ENCODE measurements at regions of chr14 and their contacts with region 1.

Region 1: GRCh38 chr14:77151918-77152588 is 10.5 kb upstream of the ZDHHC22 start:
- DNase-seq: no peak
- H3K4me3 Mint-ChIP-seq: no peak overlapping the region
- H3K27ac Mint-ChIP-seq: no peak overlapping the region
- H3K4me1 Mint-ChIP-seq: no peaks in the 10 kb centered on the region
- H3K27me3 Mint-ChIP-seq: peaks cover 63% of the 10 kb centered on the region
- CTCF ChIP-seq: no peak

Region 2: GRCh38 chr14:77116172-77116817 is 35.8 kb before region 1 on chr14:
- CTCF ChIA-PET with region 1: no interaction called
- intact Hi-C with region 1: no loop called
- DNase-seq: no peak
- H3K4me3 Mint-ChIP-seq: no peak overlapping the region
- H3K27ac Mint-ChIP-seq: no peak overlapping the region
- H3K4me1 Mint-ChIP-seq: no peaks in the 10 kb centered on the region
- H3K27me3 Mint-ChIP-seq: no peaks in the 10 kb centered on the region
- CTCF ChIP-seq: no peak

Region 3: DNA sequence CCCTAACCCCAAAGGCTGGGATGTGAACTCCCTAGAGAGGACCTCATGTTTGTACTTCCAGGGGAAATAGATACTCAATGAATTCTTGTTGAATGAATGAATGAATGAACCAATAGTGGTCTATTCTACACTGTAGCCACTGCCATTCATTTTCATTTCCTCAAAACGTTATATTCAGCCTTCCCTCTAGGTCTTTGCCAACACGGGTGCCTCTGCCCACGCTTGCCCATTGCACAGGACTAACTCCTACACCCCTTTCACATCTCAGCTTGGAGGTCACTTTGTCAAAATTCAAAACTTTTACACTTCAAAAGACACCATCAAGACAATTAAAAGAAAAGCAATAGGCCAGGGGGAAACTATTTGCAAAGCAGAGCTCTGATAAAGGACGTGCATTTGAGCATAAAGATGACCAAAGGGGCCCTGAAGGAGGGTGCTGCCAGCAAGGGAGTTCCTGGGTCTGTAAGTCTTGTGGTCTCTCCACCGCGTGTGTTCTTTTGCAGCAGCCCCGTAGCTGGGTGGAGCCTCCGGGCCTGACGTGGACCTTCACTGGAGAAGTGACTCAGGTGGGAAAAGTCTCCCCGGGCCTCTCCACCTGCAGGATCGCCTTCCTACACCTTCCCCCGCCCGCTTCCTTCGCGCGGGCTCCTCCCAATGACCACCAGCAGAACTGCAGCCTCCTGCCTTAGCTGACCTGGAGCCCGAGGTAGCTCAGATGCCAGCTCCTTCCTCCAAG is 61.1 kb after region 1 on chr14:
- CTCF ChIA-PET with region 1: interaction called, 20 read pairs
- intact Hi-C with region 1: loop called (anchors 2 kb)
- DNase-seq: peak; percentile 81
- H3K4me3 Mint-ChIP-seq: no peak overlapping the region
- H3K27ac Mint-ChIP-seq: no peak overlapping the region
- H3K4me1 Mint-ChIP-seq: no peaks in the 10 kb centered on the region
- H3K27me3 Mint-ChIP-seq: peaks cover 73% of the 10 kb centered on the region
- CTCF ChIP-seq: peak; percentile 66

Region 4: GRCh38 chr14:77314043-77314442 is 162.0 kb after region 1 on chr14:
- CTCF ChIA-PET with region 1: interaction called, 33 read pairs
- intact Hi-C with region 1: loop called (anchors 2 kb)
- DNase-seq: no peak
- H3K4me3 Mint-ChIP-seq: no peak overlapping the region
- H3K27ac Mint-ChIP-seq: no peak overlapping the region
- H3K4me1 Mint-ChIP-seq: peaks cover 15% of the 10 kb centered on the region
- H3K27me3 Mint-ChIP-seq: no peaks in the 10 kb centered on the region
- CTCF ChIP-seq: no peak